ENCODE measurements at regions of chr6 and their contacts with region 1.

Region 1: GRCh38 chr6:35457907-35458306 is 5.8 kb downstream of the FANCE start:
- DNase-seq: no peak
- H3K4me3 ChIP-seq: no peak overlapping the region
- H3K27me3 ChIP-seq: no peaks in the 10 kb centered on the region
- CTCF ChIP-seq: no peak

Region 2: DNA sequence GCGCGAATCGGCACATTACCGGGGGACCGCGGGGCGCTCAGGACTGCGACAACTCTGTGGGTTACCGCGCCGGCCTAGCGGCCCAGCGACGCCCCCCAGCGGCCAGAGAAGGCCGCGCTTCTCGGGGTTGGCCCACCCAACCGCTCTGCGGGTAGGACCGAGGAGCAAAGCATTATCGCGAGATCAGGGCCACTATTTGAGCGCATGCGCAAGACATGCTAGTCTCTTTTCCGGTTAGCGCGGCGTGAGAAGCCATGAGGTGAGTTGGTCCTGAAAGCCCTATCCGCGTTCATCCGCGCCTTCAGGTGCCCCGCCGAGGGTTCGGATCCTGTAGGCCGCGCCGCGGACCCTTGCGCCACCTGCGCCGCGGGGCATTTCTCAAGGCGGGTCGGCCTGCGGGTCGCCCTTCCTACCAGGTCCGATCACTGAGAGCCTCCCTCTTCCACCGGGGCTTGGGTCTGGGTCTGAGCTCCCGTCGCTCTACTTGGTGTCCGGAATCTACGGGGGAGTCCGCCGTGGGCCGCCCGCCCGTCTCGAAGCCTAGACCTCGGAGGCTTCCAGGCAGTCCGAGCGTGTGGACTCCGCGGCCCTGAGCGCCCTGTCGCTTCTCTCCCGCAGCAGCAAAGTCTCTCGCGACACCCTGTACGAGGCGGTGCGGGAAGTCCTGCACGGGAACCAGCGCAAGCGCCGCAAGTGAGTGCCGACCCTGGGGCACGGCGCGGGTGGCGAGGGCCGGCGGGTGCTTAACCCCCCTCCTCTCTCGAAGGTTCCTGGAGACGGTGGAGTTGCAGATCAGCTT is 10.5 kb after region 1 on chr6 and contains the start of gene RPL10A:
- CTCF ChIA-PET with region 1: interaction called, 22 read pairs
- POLR2A ChIA-PET with region 1: interaction called, 4 read pairs
- DNase-seq: peak; percentile 79
- H3K4me3 ChIP-seq: peak within 1 kb of the TSS; percentile 80
- H3K27me3 ChIP-seq: no peaks in the 10 kb centered on the region
- CTCF ChIP-seq: peak; percentile 100
- polyA plus RNA-seq, gene RPL10A: 2,524 and 2,691 TPM in 2 replicates

Measured in BJ (cell line).